Endothelial cell of umbilical vein (primary cell): ENCODE measurements at regions of chr1 and their contacts with region 1.

Region 1: GRCh38 chr1:226912587-226913176 is 27.4 kb upstream of the COQ8A start:
- DNase-seq: peak; percentile 37
- H3K4me3 ChIP-seq: no peak overlapping the region
- H3K27ac ChIP-seq: no peak overlapping the region
- H3K4me1 ChIP-seq: no peaks in the 10 kb centered on the region
- H3K27me3 ChIP-seq: no peaks in the 10 kb centered on the region
- CTCF ChIP-seq: peak; percentile 23 to 55
- POLR2A ChIP-seq: no peak

Region 2: DNA sequence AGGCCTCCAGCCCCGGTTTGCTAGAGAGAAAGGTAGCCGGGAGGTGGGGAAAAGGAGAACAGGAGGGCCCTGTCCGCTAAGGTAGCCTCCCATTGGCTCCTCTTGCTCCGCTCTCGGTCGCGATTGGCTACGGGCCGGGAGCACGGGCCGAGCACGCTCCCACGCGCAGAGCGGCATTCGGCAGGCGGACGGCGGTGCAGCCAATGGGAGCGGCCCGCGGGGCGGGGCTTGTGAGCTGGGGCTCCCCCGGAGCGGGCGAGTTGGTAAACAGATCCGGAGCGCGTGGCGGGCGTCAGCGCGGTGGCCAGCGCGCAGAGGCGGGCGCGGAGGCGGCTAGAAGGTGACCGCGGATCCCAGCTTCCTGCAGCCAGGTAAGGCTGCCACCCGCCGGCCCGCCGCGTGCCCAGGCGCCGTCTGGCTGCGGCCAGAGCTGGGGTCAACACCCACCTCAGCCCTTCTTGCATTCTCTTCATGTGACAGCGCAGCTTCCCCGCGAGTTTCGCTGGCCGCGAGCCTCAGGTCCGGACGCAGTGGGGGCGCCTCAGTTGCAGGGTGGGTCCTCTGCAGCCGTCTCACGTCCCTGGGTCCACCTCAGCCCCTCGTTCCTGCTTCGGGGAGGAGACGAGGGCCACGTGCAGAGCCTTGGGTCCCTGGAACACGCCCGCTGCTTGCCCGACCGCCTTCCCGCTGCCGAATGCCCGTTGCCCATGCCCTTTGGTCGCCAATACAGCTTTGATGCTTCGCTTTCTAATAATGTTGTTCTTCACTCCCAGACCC is 27.5 kb after region 1 on chr1 and contains the start of gene COQ8A:
- CTCF ChIA-PET with region 1: interaction called, 10 read pairs
- POLR2A ChIA-PET with region 1: no interaction called
- dilution Hi-C with region 1: no loop called
- intact Hi-C with region 1: no loop called
- DNase-seq: peak; percentile 99
- H3K4me3 ChIP-seq: peak within 1 kb of the TSS; percentile 40 to 63 (median 54)
- H3K27ac ChIP-seq: peak within 1 kb of the TSS; percentile 46
- H3K4me1 ChIP-seq: peaks cover 7% of the 10 kb centered on the region
- H3K27me3 ChIP-seq: no peaks in the 10 kb centered on the region
- CTCF ChIP-seq: no peak
- POLR2A ChIP-seq: no peak
- total RNA-seq, gene COQ8A: 7.3 and 9.4 TPM in 2 replicates

Region 3: DNA sequence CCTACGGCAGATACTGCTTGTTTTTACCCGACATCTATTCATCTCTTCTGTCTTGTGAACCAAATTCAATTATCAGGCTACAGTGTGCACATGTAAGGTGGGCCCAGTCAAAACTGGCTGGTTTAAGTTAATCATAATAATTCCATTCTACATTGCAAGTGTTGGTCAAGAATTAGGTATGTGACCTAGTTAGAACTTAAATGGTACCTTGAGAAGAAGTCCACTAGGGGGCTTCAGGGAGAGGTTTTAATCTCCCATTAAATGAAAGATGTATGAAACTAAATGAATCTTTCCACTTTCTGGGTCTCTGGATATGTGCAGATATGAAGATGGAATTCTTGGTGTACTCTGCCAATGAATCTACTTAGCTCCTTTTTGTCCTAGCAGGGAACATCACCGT is 218.5 kb after region 1 on chr1:
- CTCF ChIA-PET with region 1: no interaction called
- POLR2A ChIA-PET with region 1: no interaction called
- dilution Hi-C with region 1: no loop called
- intact Hi-C with region 1: loop called (anchors 10 kb)
- DNase-seq: peak; percentile 51
- H3K4me3 ChIP-seq: no peak overlapping the region
- H3K27ac ChIP-seq: no peak overlapping the region
- H3K4me1 ChIP-seq: peaks cover 23% of the 10 kb centered on the region
- H3K27me3 ChIP-seq: no peaks in the 10 kb centered on the region
- CTCF ChIP-seq: peak; percentile 37 to 43
- POLR2A ChIP-seq: no peak

Region 4: GRCh38 chr1:227299241-227299627 is 386.6 kb after region 1 on chr1:
- CTCF ChIA-PET with region 1: no interaction called
- POLR2A ChIA-PET with region 1: no interaction called
- dilution Hi-C with region 1: no loop called
- intact Hi-C with region 1: no loop called
- DNase-seq: peak; percentile 75
- H3K4me3 ChIP-seq: peak overlapping the region in 1 of 3 experiments; percentile 61
- H3K27ac ChIP-seq: peak overlapping the region; percentile 83
- H3K4me1 ChIP-seq: peaks cover 20% of the 10 kb centered on the region
- H3K27me3 ChIP-seq: no peaks in the 10 kb centered on the region
- CTCF ChIP-seq: no peak
- POLR2A ChIP-seq: no peak

Region 5: GRCh38 chr1:227449051-227449450 is 536.4 kb after region 1 on chr1:
- CTCF ChIA-PET with region 1: interaction called, 41 read pairs
- POLR2A ChIA-PET with region 1: no interaction called
- dilution Hi-C with region 1: no loop called
- intact Hi-C with region 1: loop called (anchors 1 kb)
- DNase-seq: no peak
- H3K4me3 ChIP-seq: no peak overlapping the region
- H3K27ac ChIP-seq: no peak overlapping the region
- H3K4me1 ChIP-seq: peaks cover 2% of the 10 kb centered on the region
- H3K27me3 ChIP-seq: peaks cover 3 to 6% of the 10 kb centered on the region in 2 experiments
- CTCF ChIP-seq: peak; percentile 29 to 37
- POLR2A ChIP-seq: no peak